GM12878 (cell line): ENCODE measurements at regions of chrX and their contacts with region 1.

Region 1: DNA sequence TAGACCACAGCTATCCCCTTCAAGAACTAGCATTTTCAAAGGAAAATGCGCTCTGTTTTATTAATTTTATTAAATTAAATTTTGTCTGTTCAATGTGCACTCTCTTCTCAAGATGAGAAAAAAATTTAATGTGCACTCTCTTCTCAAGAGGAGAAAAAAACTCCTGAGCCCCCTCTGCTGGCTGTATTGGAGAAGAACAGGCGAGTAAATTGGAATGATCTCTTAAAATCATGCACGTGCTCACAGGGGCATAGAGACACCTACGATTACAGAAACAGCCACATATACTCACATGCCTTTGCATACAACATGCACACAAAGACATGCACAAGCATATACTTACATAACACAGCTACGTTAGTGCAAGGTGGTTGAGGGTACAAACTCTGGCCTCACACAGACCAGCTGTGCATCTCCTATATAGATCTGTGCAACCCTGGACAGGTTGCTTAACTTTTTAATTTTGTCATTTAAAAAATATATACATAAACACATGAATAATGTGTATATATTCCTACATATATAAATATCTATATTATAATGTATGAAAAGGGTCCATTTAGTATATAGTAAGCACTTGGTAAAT is 176.2 kb upstream of the CXorf66 start:
- DNase-seq: peak; percentile 3
- ATAC-seq: peak; percentile 80
- H3K4me3 ChIP-seq: no peak overlapping the region
- H3K27ac ChIP-seq: no peak overlapping the region
- H3K4me1 ChIP-seq: no peaks in the 10 kb centered on the region
- H3K27me3 ChIP-seq: no peaks in the 10 kb centered on the region
- CTCF ChIP-seq: peak; percentile 58 to 67 (median 66)
- EP300 ChIP-seq: no peak
- POLR2A ChIP-seq: no peak
- RAD21 ChIP-seq: peak; percentile 56

Region 2: GRCh38 chrX:140057001-140057411 is 84.5 kb before region 1 on chrX:
- CTCF ChIA-PET with region 1: interaction called, 18 read pairs
- POLR2A ChIA-PET with region 1: no interaction called
- RAD21 ChIA-PET with region 1: interaction called, 6 read pairs
- SMC1A ChIA-PET with region 1: interaction called, 9 read pairs
- in situ Hi-C with region 1: loop called (anchors 5 kb)
- intact Hi-C with region 1: loop called (anchors 1 kb)
- DNase-seq: peak; percentile 5
- ATAC-seq: peak; percentile 99
- H3K4me3 ChIP-seq: no peak overlapping the region
- H3K27ac ChIP-seq: no peak overlapping the region
- H3K4me1 ChIP-seq: no peaks in the 10 kb centered on the region
- H3K27me3 ChIP-seq: no peaks in the 10 kb centered on the region
- CTCF ChIP-seq: peak; percentile 81 to 93 (median 90)
- EP300 ChIP-seq: no peak
- POLR2A ChIP-seq: no peak
- RAD21 ChIP-seq: peak; percentile 71

Region 3: DNA sequence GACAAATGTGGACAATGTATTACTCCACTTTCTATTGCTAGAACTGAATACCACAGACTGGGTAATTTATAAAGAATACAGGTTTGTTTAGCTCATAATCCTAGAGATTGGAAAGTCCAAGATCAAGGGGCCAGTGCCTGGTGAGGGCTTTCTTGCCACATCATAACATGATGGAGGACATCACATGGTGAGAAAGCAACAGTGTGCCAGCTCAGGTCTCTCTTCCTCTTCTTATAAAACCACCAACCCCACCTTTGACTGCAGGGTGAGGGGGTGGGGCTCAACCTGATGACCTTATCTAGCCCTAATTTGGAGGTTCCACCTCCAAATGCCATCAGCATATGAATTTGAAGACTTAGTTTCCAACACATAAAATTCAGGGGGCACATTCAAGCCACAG is 70.5 kb before region 1 on chrX:
- CTCF ChIA-PET with region 1: no interaction called
- POLR2A ChIA-PET with region 1: no interaction called
- RAD21 ChIA-PET with region 1: no interaction called
- SMC1A ChIA-PET with region 1: no interaction called
- in situ Hi-C with region 1: loop called (anchors 5 kb)
- intact Hi-C with region 1: no loop called
- DNase-seq: no peak
- ATAC-seq: no peak
- H3K4me3 ChIP-seq: no peak overlapping the region
- H3K27ac ChIP-seq: no peak overlapping the region
- H3K4me1 ChIP-seq: no peaks in the 10 kb centered on the region
- H3K27me3 ChIP-seq: no peaks in the 10 kb centered on the region
- CTCF ChIP-seq: no peak
- EP300 ChIP-seq: no peak
- POLR2A ChIP-seq: no peak
- RAD21 ChIP-seq: no peak

Region 4: GRCh38 chrX:140190441-140191108 is 49.0 kb after region 1 on chrX:
- CTCF ChIA-PET with region 1: no interaction called
- POLR2A ChIA-PET with region 1: no interaction called
- RAD21 ChIA-PET with region 1: no interaction called
- SMC1A ChIA-PET with region 1: no interaction called
- in situ Hi-C with region 1: no loop called
- intact Hi-C with region 1: no loop called
- DNase-seq: no peak
- ATAC-seq: no peak
- H3K4me3 ChIP-seq: no peak overlapping the region
- H3K27ac ChIP-seq: no peak overlapping the region
- H3K4me1 ChIP-seq: no peaks in the 10 kb centered on the region
- H3K27me3 ChIP-seq: no peaks in the 10 kb centered on the region
- CTCF ChIP-seq: no peak
- EP300 ChIP-seq: no peak
- POLR2A ChIP-seq: no peak
- RAD21 ChIP-seq: no peak